SK-N-SH (cell line): ENCODE measurements at regions of chr1 and their contacts with region 1.

Region 1: DNA sequence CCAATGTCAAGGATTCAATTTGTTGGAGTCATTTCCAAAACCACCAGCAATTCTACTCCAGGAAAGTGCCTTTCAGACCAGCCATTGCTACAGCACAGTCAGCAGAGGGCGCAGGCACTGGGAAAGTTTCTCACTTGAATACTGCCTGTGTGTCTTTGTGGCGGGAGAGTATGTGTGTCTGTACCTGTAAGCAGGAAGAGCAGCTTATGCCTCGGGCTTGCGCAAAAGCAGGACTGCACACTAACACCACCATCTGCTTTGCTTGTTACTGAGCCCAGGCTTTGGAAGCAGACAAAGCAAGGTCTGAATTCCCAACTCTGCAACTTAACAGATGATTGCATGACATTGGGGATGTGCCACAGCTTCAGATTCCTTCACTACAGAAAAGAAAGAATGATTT is 7.0 kb upstream of the CTSE start:
- DNase-seq: peak; percentile 59
- H3K4me3 ChIP-seq: peak overlapping the region in 1 of 2 experiments; percentile 8; a peak in 1 of 4 replicates
- H3K27ac ChIP-seq: no peak overlapping the region
- H3K4me1 ChIP-seq: peaks cover 0 to 2% of the 10 kb centered on the region in 2 experiments; a peak in 1 of 4 replicates
- H3K27me3 ChIP-seq: peaks cover 16% of the 10 kb centered on the region; the same call in 1 of the 2 replicates
- CTCF ChIP-seq: peak; percentile 82
- EP300 ChIP-seq: no peak
- RAD21 ChIP-seq: peak; percentile 82

Region 2: DNA sequence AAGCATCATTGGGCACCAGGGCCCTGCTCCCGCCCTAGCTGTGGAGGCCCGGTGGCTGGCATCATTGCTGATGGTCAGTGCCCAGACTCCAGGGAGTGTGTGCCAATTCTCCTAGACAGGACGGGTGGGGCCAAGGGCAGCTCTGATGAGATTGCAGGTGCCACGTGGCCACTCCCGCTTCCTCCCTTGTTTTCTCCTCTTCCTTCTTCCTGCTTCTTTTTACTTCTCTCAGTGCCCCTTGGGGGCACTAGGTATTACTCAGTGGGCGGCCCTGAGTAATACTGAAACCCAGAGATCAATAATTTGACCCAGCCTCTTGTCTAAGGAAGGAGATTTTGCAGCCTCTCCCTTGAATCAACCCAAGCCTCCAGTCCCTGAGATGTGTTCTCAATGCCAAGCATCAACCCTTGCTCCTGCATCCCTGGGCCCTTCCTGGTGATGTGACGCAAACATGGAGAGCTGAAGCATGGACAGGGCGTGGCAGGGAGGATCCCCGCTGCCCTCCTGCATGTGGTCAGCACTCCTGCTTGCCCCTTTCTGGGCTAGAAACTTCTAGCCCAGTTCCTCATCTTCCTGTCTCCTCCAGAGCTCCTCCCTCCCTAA is 493.9 kb before region 1 on chr1:
- CTCF ChIA-PET with region 1: no interaction called
- POLR2A ChIA-PET with region 1: no interaction called
- DNase-seq: no peak
- H3K4me3 ChIP-seq: no peak overlapping the region
- H3K27ac ChIP-seq: no peak overlapping the region
- H3K4me1 ChIP-seq: peaks cover 0 to 12% of the 10 kb centered on the region in 2 experiments; a peak in 1 of 4 replicates
- H3K27me3 ChIP-seq: no peaks in the 10 kb centered on the region
- CTCF ChIP-seq: no peak
- EP300 ChIP-seq: no peak
- RAD21 ChIP-seq: no peak

Region 3: DNA sequence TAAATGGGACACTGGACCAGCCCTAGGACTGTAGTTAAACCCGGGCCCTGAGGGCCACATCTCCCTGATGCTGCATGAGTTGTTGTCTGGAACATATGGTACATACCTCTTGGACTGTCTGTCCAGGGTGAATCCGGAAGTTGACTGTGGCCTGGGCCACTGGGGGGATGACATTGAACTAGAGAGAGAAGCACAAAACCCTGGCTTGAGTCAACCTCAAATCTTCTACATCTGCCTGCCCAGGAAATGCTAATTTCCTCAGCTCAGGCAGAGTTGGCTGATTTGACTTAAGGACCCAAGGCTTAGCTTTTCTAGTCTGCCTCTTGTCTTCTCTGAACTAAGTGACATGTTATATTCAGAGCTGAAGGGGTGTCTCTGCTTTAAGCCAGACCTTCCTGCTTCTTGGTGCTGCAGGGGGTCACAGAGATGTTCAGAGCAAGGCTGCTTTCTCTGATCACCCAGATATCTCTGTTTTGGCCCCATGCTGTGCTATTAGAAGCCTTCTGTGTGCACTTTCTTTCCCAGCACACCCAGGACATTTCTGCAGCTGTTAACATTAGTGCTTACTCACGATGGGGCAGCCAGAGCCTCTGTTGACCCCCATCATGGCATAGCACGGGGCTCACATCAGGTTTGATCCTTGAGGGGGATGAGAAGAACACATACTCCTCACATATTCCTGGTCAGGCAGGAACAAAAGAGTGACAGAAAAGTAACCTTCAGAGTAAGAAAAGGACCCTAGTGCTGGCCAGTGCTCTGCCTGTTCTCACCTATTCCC is 190.4 kb before region 1 on chr1:
- CTCF ChIA-PET with region 1: no interaction called
- POLR2A ChIA-PET with region 1: no interaction called
- DNase-seq: no peak
- H3K4me3 ChIP-seq: no peak overlapping the region
- H3K27ac ChIP-seq: no peak overlapping the region
- H3K4me1 ChIP-seq: peaks cover 0 to 12% of the 10 kb centered on the region in 2 experiments; a peak in 1 of 4 replicates
- H3K27me3 ChIP-seq: no peaks in the 10 kb centered on the region
- CTCF ChIP-seq: no peak
- EP300 ChIP-seq: no peak
- RAD21 ChIP-seq: no peak

Region 4: GRCh38 chr1:205919026-205919746 is 111.5 kb before region 1 on chr1:
- CTCF ChIA-PET with region 1: interaction called, 10 read pairs
- POLR2A ChIA-PET with region 1: no interaction called
- DNase-seq: peak; percentile 79
- H3K4me3 ChIP-seq: no peak overlapping the region; a peak in 1 of 4 replicates
- H3K27ac ChIP-seq: no peak overlapping the region
- H3K4me1 ChIP-seq: peaks cover 0 to 7% of the 10 kb centered on the region in 2 experiments; a peak in 1 of 4 replicates
- H3K27me3 ChIP-seq: no peaks in the 10 kb centered on the region
- CTCF ChIP-seq: peak; percentile 81
- EP300 ChIP-seq: no peak
- RAD21 ChIP-seq: peak; percentile 92

Region 5: DNA sequence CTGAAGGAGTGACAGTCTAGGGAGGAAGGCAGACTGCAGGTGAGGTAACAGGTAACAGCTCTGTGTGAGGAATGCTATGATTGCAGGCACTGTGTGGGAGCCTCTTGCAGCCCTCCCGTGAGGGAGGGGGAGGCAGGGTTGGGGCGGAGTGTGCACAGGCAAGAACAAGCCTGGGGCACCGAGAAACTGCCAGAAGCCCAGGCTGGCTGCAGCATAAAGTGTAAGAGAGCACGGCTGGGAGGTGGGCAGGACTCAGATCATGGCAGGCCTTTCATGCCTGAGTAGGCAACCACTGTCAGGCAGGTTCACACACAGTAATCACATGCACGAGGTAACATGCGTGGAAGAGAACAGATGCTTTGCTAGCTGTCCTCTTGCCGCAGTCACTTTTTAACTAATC is 10.9 kb after region 1 on chr1:
- CTCF ChIA-PET with region 1: interaction called, 23 read pairs
- POLR2A ChIA-PET with region 1: no interaction called
- DNase-seq: peak; percentile 25
- H3K4me3 ChIP-seq: no peak overlapping the region
- H3K27ac ChIP-seq: no peak overlapping the region
- H3K4me1 ChIP-seq: peaks cover 0 to 5% of the 10 kb centered on the region in 2 experiments; a peak in 1 of 4 replicates
- H3K27me3 ChIP-seq: peaks cover 37% of the 10 kb centered on the region; the same call in 1 of the 2 replicates
- CTCF ChIP-seq: no peak
- EP300 ChIP-seq: no peak
- RAD21 ChIP-seq: no peak

Region 6: GRCh38 chr1:206080026-206080820 is 49.5 kb after region 1 on chr1:
- CTCF ChIA-PET with region 1: interaction called, 16 read pairs
- POLR2A ChIA-PET with region 1: no interaction called
- DNase-seq: no peak
- H3K4me3 ChIP-seq: no peak overlapping the region
- H3K27ac ChIP-seq: no peak overlapping the region
- H3K4me1 ChIP-seq: peaks cover 0 to 7% of the 10 kb centered on the region in 2 experiments; a peak in 2 of 4 replicates
- H3K27me3 ChIP-seq: peaks cover 14% of the 10 kb centered on the region; the same call in 1 of the 2 replicates
- CTCF ChIP-seq: no peak
- EP300 ChIP-seq: peak in 1 of 2 experiments; percentile 43; a peak in 1 of 4 replicates
- RAD21 ChIP-seq: no peak

Region 7: GRCh38 chr1:206106328-206107167 is 75.8 kb after region 1 on chr1:
- CTCF ChIA-PET with region 1: interaction called, 248 read pairs
- POLR2A ChIA-PET with region 1: interaction called, 5 read pairs
- DNase-seq: peak; percentile 84
- H3K4me3 ChIP-seq: no peak overlapping the region; a peak in 1 of 4 replicates
- H3K27ac ChIP-seq: no peak overlapping the region
- H3K4me1 ChIP-seq: no peaks in the 10 kb centered on the region
- H3K27me3 ChIP-seq: peaks cover 11% of the 10 kb centered on the region; the same call in 1 of the 2 replicates
- CTCF ChIP-seq: peak; percentile 90
- EP300 ChIP-seq: no peak
- RAD21 ChIP-seq: peak; percentile 92

Region 8: DNA sequence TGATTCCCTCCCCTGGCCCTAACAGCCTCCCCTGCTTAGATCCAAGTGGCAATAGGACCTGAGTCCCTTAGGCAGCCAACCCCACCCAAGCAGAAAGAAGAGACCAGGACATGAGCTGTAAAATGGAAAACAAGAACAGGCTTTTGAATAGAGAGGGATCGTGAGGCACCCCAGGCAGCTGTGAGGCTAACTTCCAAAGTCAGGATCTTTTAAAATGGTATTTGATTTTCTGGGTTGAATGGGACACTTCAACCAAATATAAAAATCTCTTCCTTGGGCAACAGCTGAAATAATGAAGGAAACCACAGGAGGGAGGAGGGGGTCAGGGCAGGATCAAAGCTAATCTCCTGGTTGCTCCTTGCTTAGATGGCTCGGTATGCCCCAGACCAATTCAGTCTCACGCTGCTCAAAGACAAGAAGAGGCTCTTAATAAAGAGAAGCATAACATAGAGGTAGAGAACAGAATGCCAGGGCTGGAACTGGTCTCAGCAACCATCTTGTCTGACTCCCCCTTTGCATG is 115.1 kb after region 1 on chr1:
- CTCF ChIA-PET with region 1: no interaction called
- POLR2A ChIA-PET with region 1: no interaction called
- DNase-seq: no peak
- H3K4me3 ChIP-seq: no peak overlapping the region
- H3K27ac ChIP-seq: no peak overlapping the region
- H3K4me1 ChIP-seq: no peaks in the 10 kb centered on the region
- H3K27me3 ChIP-seq: peaks cover 39% of the 10 kb centered on the region
- CTCF ChIP-seq: no peak
- EP300 ChIP-seq: no peak
- RAD21 ChIP-seq: no peak